ENCODE measurements at regions of chr6 and their contacts with region 1.

Region 1: GRCh38 chr6:11496152-11497060 is 41.1 kb upstream of the TMEM170B start:
- DNase-seq: peak; percentile 87
- H3K4me3 Mint-ChIP-seq: no peak overlapping the region
- H3K27ac Mint-ChIP-seq: no peak overlapping the region
- H3K4me1 Mint-ChIP-seq: peaks cover 13% of the 10 kb centered on the region
- H3K27me3 Mint-ChIP-seq: no peaks in the 10 kb centered on the region

Region 2: GRCh38 chr6:11093589-11094410 is 402.6 kb before region 1 on chr6 and contains the start of gene SMIM13:
- CTCF ChIA-PET with region 1: interaction called, 7 read pairs
- intact Hi-C with region 1: loop called (anchors 1 kb)
- DNase-seq: peak; percentile 98
- H3K4me3 Mint-ChIP-seq: peak within 1 kb of the TSS; percentile 92
- H3K27ac Mint-ChIP-seq: peak within 1 kb of the TSS; percentile 96
- H3K4me1 Mint-ChIP-seq: peaks cover 27% of the 10 kb centered on the region
- H3K27me3 Mint-ChIP-seq: no peaks in the 10 kb centered on the region
- total RNA-seq, gene SMIM13: 5.7 to 7.1 TPM

Region 3: GRCh38 chr6:11172501-11173332 is 323.7 kb before region 1 on chr6:
- CTCF ChIA-PET with region 1: interaction called, 71 read pairs
- intact Hi-C with region 1: loop called (anchors 1 kb)
- DNase-seq: peak; percentile 84
- H3K4me3 Mint-ChIP-seq: no peak overlapping the region
- H3K27ac Mint-ChIP-seq: no peak overlapping the region
- H3K4me1 Mint-ChIP-seq: peaks cover 11% of the 10 kb centered on the region
- H3K27me3 Mint-ChIP-seq: no peaks in the 10 kb centered on the region

Region 4: GRCh38 chr6:11232193-11232769 is 264.1 kb before region 1 on chr6 and contains the start of gene NEDD9:
- CTCF ChIA-PET with region 1: interaction called, 11 read pairs
- intact Hi-C with region 1: loop called (anchors 1 kb)
- DNase-seq: peak; percentile 98
- H3K4me3 Mint-ChIP-seq: peak within 1 kb of the TSS; percentile 87
- H3K27ac Mint-ChIP-seq: peak within 1 kb of the TSS; percentile 97
- H3K4me1 Mint-ChIP-seq: peaks cover 48% of the 10 kb centered on the region
- H3K27me3 Mint-ChIP-seq: peaks cover 2% of the 10 kb centered on the region
- total RNA-seq, gene NEDD9: 17.5 to 18.8 TPM

Region 5: DNA sequence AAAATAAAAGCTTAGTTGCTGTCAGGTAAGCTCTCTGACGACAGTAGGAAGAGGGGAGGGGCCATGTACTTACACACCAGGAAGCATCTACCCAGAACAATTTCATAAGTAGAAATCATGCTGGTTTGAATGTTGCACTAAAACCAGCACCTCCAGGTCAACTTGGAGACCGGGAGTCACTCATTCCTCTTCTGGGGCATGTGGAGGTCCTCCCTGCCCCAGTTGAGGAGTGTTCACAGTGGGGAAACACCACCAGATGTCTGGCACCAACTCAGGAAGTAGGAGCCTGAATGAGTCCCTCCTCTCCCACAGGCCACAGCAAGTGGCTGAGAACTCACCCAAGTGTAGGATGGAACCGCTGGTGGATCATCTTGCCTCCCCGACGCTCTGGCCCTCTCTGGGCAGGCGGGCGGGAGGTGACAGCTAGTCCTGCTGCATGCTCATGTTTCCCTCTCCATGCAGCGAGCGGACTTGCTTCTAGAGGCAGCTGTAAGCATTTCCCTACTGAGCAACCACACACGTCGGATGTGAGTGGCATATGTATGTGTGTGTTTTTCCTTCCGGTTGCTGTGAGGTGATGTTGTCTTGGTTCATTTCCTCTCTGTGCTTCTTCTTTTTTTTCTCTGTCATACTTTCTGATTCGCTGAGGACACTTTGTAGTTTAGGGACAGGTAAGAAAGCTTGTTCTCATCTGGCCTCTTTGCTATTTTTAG is 114.4 kb before region 1 on chr6:
- CTCF ChIA-PET with region 1: interaction called, 13 read pairs
- intact Hi-C with region 1: loop called (anchors 1 kb)
- DNase-seq: peak; percentile 83
- H3K4me3 Mint-ChIP-seq: peak overlapping the region; percentile 86
- H3K27ac Mint-ChIP-seq: peak overlapping the region; percentile 91
- H3K4me1 Mint-ChIP-seq: peaks cover 57% of the 10 kb centered on the region
- H3K27me3 Mint-ChIP-seq: no peaks in the 10 kb centered on the region

Region 6: GRCh38 chr6:11575408-11576033 is 79.1 kb after region 1 on chr6:
- CTCF ChIA-PET with region 1: interaction called, 17 read pairs
- intact Hi-C with region 1: loop called (anchors 1 kb)
- DNase-seq: peak; percentile 75
- H3K4me3 Mint-ChIP-seq: no peak overlapping the region
- H3K27ac Mint-ChIP-seq: no peak overlapping the region
- H3K4me1 Mint-ChIP-seq: no peaks in the 10 kb centered on the region
- H3K27me3 Mint-ChIP-seq: no peaks in the 10 kb centered on the region